ENCODE measurements at regions of chr5 and their contacts with region 1.

Region 1: GRCh38 chr5:6243706-6244338 is 134.5 kb downstream of the MED10 start:
- DNase-seq: no peak
- ATAC-seq: no peak
- H3K4me3 ChIP-seq: no peak overlapping the region
- H3K4me3 Mint-ChIP-seq: no peak overlapping the region
- H3K27ac ChIP-seq: no peak overlapping the region
- H3K27ac Mint-ChIP-seq: no peak overlapping the region
- H3K4me1 ChIP-seq: no peaks in the 10 kb centered on the region
- H3K4me1 Mint-ChIP-seq: no peaks in the 10 kb centered on the region
- H3K27me3 ChIP-seq: no peaks in the 10 kb centered on the region
- H3K27me3 Mint-ChIP-seq: peaks cover 0 to 11% (median 5%) of the 10 kb centered on the region in 5 donors

Region 2: GRCh38 chr5:5278815-5279381 is 964.9 kb before region 1 on chr5:
- CTCF ChIA-PET with region 1: no interaction called
- POLR2A ChIA-PET with region 1: no interaction called
- intact Hi-C with region 1: loop called in 1 of 2 experiments (anchors 5 kb)
- DNase-seq: no peak
- ATAC-seq: no peak
- H3K4me3 ChIP-seq: no peak overlapping the region
- H3K4me3 Mint-ChIP-seq: no peak overlapping the region
- H3K27ac ChIP-seq: no peak overlapping the region
- H3K27ac Mint-ChIP-seq: no peak overlapping the region
- H3K4me1 ChIP-seq: no peaks in the 10 kb centered on the region
- H3K4me1 Mint-ChIP-seq: no peaks in the 10 kb centered on the region
- H3K27me3 ChIP-seq: no peaks in the 10 kb centered on the region
- H3K27me3 Mint-ChIP-seq: peaks cover 0 to 13% (median 4%) of the 10 kb centered on the region in 5 donors

Region 3: GRCh38 chr5:7638456-7638855 is 1394.6 kb after region 1 on chr5:
- CTCF ChIA-PET with region 1: no interaction called
- POLR2A ChIA-PET with region 1: no interaction called
- intact Hi-C with region 1: no loop called
- DNase-seq: no peak
- ATAC-seq: no peak
- H3K4me3 ChIP-seq: no peak overlapping the region
- H3K4me3 Mint-ChIP-seq: no peak overlapping the region
- H3K27ac ChIP-seq: no peak overlapping the region
- H3K27ac Mint-ChIP-seq: no peak overlapping the region
- H3K4me1 ChIP-seq: no peaks in the 10 kb centered on the region
- H3K4me1 Mint-ChIP-seq: no peaks in the 10 kb centered on the region
- H3K27me3 ChIP-seq: no peaks in the 10 kb centered on the region
- H3K27me3 Mint-ChIP-seq: peaks cover 0 to 14% (median 0%) of the 10 kb centered on the region in 5 donors

Measured in naive thymus-derived CD4-positive, alpha-beta T cell (primary cell).